Heart right ventricle (tissue), 16 donors: ENCODE measurements at regions of chr5 and their contacts with region 1.

Region 1: DNA sequence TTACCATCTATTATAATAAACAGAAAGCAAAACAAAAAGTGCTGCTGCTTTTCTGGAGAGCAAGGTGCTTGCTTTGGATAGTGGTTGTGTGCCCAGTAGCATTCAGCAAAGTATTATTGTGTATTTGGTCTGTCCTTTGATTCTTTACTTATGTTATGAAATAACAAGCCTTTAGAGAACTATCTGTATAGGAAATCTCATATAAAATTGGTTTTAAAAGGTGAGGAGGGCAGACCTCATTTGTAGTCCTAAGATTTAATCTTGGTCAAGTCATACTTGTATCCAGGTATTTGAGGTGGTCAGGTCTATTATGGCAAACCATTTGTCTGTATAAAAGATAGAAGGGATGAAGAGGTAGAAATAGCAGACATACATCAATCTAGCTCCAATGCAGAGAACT is 53.3 kb downstream of the BDP1 start:
- DNase-seq: no peak
- ATAC-seq: no peak
- H3K4me3 ChIP-seq: no peak overlapping the region
- H3K27ac ChIP-seq: no peak overlapping the region
- H3K4me1 ChIP-seq: no peaks in the 10 kb centered on the region
- H3K27me3 ChIP-seq: no peaks in the 10 kb centered on the region
- CTCF ChIP-seq: no peak

Region 2: GRCh38 chr5:71482132-71482531 is 26.6 kb before region 1 on chr5:
- intact Hi-C with region 1: loop called in 1 of 10 experiments (anchors 1 kb)
- DNase-seq: peak in 1 of 2 donors; percentile 14
- ATAC-seq: no peak
- H3K4me3 ChIP-seq: no peak overlapping the region
- H3K27ac ChIP-seq: no peak overlapping the region
- H3K4me1 ChIP-seq: peaks cover 0 to 11% (median 9%) of the 10 kb centered on the region in 9 donors
- H3K27me3 ChIP-seq: no peaks in the 10 kb centered on the region
- CTCF ChIP-seq: no peak

Region 3: GRCh38 chr5:71537687-71538086 is 28.9 kb after region 1 on chr5:
- intact Hi-C with region 1: loop called in 1 of 10 experiments (anchors 5 kb)
- DNase-seq: no peak
- ATAC-seq: no peak
- H3K4me3 ChIP-seq: no peak overlapping the region
- H3K27ac ChIP-seq: no peak overlapping the region
- H3K4me1 ChIP-seq: peaks cover 0 to 14% (median 0%) of the 10 kb centered on the region in 9 donors
- H3K27me3 ChIP-seq: no peaks in the 10 kb centered on the region
- CTCF ChIP-seq: no peak

Region 4: DNA sequence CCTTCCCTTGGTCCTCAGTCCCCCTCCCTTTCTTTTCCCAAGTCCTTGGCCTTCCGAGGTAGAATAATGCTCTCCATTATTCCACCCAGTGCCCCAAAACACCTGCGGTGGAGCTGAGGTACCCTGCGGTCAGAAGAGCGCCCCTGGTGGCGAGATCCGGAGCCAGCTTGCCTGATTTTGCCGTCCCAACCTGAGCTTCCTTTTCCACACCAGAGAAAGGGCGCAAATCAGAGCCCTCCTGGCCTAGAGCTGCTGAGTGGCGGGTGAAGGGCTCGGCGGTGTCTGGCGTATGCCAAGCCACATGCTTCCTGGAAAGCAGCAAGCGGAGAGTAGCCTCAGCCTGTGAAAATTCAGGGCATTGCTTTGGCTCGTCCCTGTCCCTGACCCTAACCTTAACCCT is 189.2 kb after region 1 on chr5:
- intact Hi-C with region 1: no loop called
- DNase-seq: peak in 1 of 2 donors; percentile 21
- ATAC-seq: peak in 5 of 8 donors; percentile 41 to 88 (median 67)
- H3K4me3 ChIP-seq: no peak overlapping the region
- H3K27ac ChIP-seq: no peak overlapping the region
- H3K4me1 ChIP-seq: peaks cover 0 to 10% (median 0%) of the 10 kb centered on the region in 9 donors
- H3K27me3 ChIP-seq: peaks cover 0 to 27% (median 10%) of the 10 kb centered on the region in 7 donors
- CTCF ChIP-seq: peak; percentile 12 to 61 (median 55)

Region 5: GRCh38 chr5:72681781-72682180 is 1173.0 kb after region 1 on chr5:
- intact Hi-C with region 1: loop called in 1 of 10 experiments (anchors 5 kb)
- DNase-seq: no peak
- ATAC-seq: no peak
- H3K4me3 ChIP-seq: no peak overlapping the region
- H3K27ac ChIP-seq: no peak overlapping the region
- H3K4me1 ChIP-seq: no peaks in the 10 kb centered on the region
- H3K27me3 ChIP-seq: peaks cover 0 to 16% (median 0%) of the 10 kb centered on the region in 7 donors
- CTCF ChIP-seq: no peak